ENCODE measurements at regions of chr3 and their contacts with region 1.

Region 1: GRCh38 chr3:133927540-133928066 is 31.9 kb upstream of the RAB6B start:
- ATAC-seq: peak; percentile 79 to 96 (median 94)
- H3K4me3 ChIP-seq: peak overlapping the region; percentile 32 to 43 (median 39)
- H3K27ac ChIP-seq: no peak overlapping the region
- H3K4me1 ChIP-seq: peaks cover 0 to 3% of the 10 kb centered on the region in 2 donors

Region 2: DNA sequence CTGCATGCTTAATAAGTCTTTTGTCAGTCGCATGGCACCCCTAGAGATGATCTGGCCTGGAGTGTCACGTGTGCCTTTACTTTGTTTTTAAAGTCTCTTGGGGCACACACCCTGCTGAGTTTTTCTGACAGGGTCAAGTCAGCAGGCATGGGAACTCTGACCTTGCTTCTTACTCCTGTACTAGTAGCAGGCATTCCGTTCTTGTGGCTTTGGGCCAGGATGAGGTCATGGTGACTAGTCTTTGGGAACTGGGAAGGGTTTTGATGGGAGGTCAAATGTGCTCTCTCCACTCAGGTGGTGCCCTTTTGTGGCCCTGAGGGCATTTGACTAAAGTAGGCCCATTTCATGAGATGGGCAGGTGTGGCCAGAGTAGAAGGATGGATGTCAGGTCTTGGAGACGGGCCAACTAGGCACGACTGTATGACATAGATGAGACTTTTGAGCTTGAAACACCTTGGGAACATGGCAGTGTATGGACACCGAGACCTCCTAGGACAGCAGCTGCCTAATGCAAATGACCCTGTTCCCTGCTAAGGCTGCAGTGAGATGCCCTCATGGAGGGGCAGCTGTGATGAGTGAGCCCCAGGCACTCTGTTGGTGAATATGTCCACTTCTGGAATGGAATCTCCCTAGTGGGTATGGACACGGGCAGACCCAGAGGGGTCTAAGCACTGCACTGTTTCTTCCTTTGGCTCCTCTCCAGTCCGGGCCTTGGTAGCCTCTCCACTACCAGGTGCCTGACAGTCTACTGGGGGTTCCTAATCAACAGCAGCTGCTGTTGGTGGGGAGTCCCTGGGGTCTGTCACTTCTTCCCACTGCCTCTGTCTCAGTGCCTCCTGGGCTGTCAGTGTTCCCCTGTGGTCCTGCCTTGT is 105.6 kb before region 1 on chr3:
- in situ Hi-C with region 1: loop called in 3 of 9 experiments (anchors 5 to 25 kb)
- ATAC-seq: peak in 3 of 8 experiments; percentile 5 to 71 (median 63)
- H3K4me3 ChIP-seq: no peak overlapping the region
- H3K27ac ChIP-seq: no peak overlapping the region
- H3K4me1 ChIP-seq: no peaks in the 10 kb centered on the region

Region 3: GRCh38 chr3:134018406-134018805 is 90.8 kb after region 1 on chr3:
- in situ Hi-C with region 1: no loop called
- ATAC-seq: peak in 2 of 8 experiments; percentile 61 to 80
- H3K4me3 ChIP-seq: no peak overlapping the region
- H3K27ac ChIP-seq: no peak overlapping the region
- H3K4me1 ChIP-seq: no peaks in the 10 kb centered on the region

Region 4: DNA sequence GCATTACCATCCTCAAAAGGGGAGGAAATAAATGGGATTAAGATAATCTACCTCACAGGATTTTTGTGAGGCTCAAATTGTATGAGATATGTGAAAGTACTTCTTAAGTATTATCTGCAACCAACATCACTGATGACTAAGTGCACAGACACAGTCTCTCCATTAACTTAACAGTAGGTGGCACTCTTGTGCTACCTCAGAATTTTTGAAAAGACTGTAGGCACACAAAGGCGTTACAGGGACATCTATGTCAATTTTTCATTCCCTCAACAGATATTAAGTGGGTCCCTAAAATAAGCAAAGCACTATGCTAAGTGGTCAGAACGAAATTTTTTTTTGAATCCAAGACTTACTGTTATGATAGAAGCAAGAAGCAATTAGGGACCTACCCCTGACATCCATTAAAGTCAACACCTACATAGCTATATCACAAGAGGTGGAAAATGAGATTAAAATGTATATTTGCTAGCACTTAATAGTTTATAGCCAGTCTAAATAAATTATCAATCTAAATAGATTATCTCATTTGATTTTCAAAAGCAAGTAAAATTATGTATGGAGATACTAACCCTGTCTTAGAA is 270.2 kb after region 1 on chr3:
- in situ Hi-C with region 1: loop called in 3 of 9 experiments (anchors 25 kb)
- ATAC-seq: peak in 7 of 8 experiments; percentile 53 to 96 (median 83)
- H3K4me3 ChIP-seq: no peak overlapping the region
- H3K27ac ChIP-seq: no peak overlapping the region
- H3K4me1 ChIP-seq: no peaks in the 10 kb centered on the region

Region 5: DNA sequence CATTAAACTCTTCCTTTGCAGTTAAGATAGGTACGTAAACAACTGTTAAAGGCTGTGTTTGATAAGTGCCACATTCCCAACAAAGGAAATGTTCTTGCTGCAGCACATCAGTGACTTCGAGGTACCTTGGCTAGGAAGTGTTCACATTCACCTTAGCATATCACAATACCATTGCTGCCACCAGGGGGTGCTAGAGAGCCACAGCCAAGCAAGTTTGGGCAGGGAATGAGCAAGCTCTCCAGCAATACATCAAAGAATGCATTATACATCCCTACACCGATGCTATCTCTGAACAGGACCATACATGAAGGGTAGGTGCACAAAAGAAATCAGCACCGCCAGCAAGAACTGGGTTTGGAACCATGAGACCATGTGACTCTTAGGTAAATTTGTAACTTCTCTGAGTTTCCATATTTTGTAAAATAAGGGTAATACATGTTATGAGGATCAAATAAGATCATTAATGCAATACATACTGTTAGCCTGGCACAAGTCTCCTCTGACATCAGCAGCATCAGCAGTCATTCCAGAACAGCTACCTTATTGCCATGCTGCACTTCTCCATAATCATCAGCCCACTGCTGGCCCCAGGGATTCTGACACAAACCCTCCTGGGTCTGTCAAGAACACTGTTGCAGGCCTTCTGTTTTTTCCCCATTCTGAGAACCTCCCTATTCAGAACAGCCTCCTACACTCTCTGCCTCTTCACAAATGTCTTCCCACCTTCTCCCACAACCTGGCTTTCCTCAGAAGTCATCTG is 285.5 kb after region 1 on chr3:
- in situ Hi-C with region 1: loop called in 2 of 9 experiments (anchors 25 kb)
- ATAC-seq: peak; percentile 61 to 96 (median 87)
- H3K4me3 ChIP-seq: no peak overlapping the region
- H3K27ac ChIP-seq: no peak overlapping the region
- H3K4me1 ChIP-seq: no peaks in the 10 kb centered on the region

Region 6: DNA sequence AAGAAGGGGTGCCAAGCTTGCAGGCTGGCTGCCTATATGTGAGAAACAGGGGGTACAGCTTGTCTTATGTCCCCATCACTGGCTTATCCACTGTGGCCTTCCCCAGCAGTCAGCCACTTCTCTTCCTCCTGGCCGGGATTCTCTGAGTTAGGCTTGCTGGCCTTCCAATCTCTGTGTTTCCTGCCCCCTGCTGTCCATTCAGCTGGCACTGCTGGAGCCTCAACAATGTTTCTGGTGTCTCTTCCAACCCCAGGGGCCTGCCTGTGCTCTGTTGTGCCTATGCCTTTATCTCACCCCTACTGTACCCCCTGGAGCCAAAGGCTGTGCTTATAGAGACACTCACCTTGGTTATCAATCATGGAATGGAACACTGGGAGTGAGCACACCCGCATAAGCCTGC is 521.7 kb after region 1 on chr3:
- in situ Hi-C with region 1: no loop called
- ATAC-seq: peak in 3 of 8 experiments; percentile 44 to 67 (median 54)
- H3K4me3 ChIP-seq: no peak overlapping the region
- H3K27ac ChIP-seq: no peak overlapping the region
- H3K4me1 ChIP-seq: no peaks in the 10 kb centered on the region